ENCODE measurements at regions of chr15 and their contacts with region 1.

Region 1: DNA sequence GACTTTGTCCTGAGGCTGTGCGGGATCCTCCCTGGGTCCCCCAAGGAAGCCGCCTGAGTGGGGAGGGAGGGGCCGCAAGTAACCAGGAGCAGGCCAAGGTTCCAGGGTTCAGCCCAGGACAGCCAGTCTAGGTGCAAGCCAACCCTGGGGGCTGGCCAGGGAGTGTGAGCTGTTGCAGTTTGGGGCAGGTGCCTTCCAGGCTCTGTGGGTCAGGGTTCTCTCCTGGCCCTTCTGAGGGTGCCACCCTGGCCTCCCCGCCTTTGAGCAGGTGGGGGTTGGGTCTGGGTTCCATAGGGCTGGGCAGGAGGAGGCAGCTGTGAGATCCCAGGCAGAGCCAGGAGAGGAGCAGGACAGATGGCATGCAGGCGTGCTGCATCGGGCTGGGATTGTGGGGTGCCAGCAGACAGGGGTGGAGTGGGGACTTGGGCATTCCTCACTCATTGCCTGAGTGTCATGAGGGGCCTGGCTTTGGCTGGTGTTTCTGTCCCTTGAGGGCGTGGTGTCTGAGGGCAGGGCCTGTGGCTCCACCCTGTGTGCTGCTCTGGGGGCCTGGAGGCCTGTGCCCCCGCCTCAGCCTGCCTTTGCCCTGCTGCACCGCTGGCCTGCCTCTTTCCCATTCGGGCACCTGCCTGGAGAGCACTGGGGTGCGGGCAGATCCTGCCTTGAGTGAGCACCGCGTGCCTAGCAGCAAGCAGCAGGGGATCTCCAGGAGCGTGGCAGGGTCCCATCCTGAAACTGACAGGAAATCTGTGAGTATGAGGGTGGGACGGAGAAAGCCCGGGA is 18.4 kb downstream of the KLF13 start:
- DNase-seq: peak in 1 of 9 experiments; percentile 68
- ATAC-seq: no peak
- H3K4me3 ChIP-seq: peak overlapping the region; percentile 55 to 72
- H3K4me3 Mint-ChIP-seq: peak overlapping the region; percentile 91
- H3K27ac ChIP-seq: peak overlapping the region; percentile 70 to 78
- H3K27ac Mint-ChIP-seq: peak overlapping the region; percentile 97
- H3K4me1 ChIP-seq: peaks cover 99% of the 10 kb centered on the region
- H3K4me1 Mint-ChIP-seq: peaks cover 98% of the 10 kb centered on the region
- H3K27me3 ChIP-seq: no peaks in the 10 kb centered on the region
- H3K27me3 Mint-ChIP-seq: no peaks in the 10 kb centered on the region
- CTCF ChIP-seq: no peak

Region 2: DNA sequence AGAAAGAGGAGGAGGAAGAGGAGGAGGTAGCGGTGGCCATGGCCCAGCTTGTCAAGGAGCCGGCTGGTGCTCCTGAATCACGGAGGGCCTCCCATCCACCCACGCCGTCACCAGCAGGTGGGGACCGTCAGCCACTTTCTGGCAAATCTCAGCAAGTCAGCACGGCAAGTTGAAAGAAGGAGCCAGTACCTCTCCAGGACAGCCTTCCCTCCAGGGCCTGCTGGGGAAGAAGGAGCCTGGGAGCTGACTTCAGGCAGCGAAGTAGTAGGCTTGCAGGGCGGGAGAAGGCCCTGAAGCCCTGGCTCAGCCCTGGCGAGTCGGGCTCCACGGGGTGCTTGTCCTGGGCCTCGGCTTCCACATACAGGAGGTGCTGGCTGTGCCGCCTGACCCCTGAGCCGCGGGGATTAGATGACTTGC is 144.3 kb before region 1 on chr15:
- CTCF ChIA-PET with region 1: interaction called, 5 read pairs
- POLR2A ChIA-PET with region 1: interaction called, 3 read pairs
- intact Hi-C with region 1: loop called in 1 of 2 experiments (anchors 5 kb)
- DNase-seq: peak; percentile 52 to 83 (median 71)
- ATAC-seq: peak; percentile 76
- H3K4me3 ChIP-seq: no peak overlapping the region
- H3K4me3 Mint-ChIP-seq: no peak overlapping the region
- H3K27ac ChIP-seq: no peak overlapping the region
- H3K27ac Mint-ChIP-seq: no peak overlapping the region
- H3K4me1 ChIP-seq: peaks cover 20% of the 10 kb centered on the region
- H3K4me1 Mint-ChIP-seq: peaks cover 20% of the 10 kb centered on the region
- H3K27me3 ChIP-seq: no peaks in the 10 kb centered on the region
- H3K27me3 Mint-ChIP-seq: no peaks in the 10 kb centered on the region
- CTCF ChIP-seq: peak; percentile 51

Region 3: DNA sequence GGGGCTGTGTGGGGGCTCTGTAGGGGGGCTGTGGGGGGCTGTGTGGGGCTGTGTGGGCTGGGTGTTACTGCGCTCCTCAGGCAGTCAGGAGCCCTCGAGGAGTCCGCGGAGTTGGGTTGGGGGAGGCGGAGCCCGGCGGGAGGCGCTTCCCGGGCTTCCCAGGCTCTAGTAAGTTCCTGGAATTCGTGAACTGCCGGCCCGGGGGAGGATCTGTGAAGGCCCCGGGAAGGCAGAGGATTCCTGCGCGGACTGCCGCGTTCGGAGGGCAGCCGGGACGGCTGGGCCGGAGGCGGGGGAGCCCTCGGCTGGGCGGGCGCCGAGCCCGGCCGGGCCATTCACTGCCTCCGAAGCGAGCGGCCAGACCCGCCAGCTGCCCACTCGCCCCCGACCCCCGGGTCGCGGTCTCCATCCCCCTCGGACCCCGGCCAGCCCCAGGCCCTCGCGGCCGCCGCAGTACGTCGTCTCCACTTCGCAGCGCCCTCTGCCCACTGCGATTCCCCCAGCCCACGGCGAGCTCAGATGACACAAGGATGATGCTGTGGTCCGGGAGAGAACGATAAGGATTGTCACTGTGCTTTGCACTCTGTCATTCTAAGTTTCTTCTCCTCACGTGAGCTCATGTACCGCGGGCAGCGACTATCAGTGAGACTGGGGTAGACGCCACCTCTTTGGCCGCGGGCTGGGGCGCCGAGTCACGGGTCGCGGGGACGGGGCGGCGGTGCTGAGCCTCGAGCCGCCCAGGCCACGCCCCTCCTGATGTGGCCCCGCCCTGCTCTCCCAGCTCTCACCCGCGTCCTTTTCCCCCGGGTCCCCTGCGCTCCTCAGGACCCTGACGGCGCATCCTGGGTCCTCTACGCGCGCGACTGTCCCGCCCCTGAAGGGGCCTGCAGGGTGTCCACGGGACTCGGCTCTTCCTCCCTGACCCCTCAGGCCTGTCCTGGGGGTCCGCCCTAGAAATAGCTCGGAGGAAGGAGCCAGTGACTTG is 47.0 kb after region 1 on chr15:
- CTCF ChIA-PET with region 1: interaction called, 3 read pairs
- POLR2A ChIA-PET with region 1: interaction called, 8 read pairs
- intact Hi-C with region 1: loop called in 1 of 2 experiments (anchors 2 kb)
- DNase-seq: peak; percentile 62 to 92 (median 86)
- ATAC-seq: peak; percentile 82
- H3K4me3 ChIP-seq: peak overlapping the region; percentile 86 to 95
- H3K4me3 Mint-ChIP-seq: peak overlapping the region; percentile 91
- H3K27ac ChIP-seq: peak overlapping the region; percentile 80 to 81
- H3K27ac Mint-ChIP-seq: peak overlapping the region; percentile 95
- H3K4me1 ChIP-seq: peaks cover 44% of the 10 kb centered on the region
- H3K4me1 Mint-ChIP-seq: peaks cover 61% of the 10 kb centered on the region
- H3K27me3 ChIP-seq: no peaks in the 10 kb centered on the region
- H3K27me3 Mint-ChIP-seq: no peaks in the 10 kb centered on the region
- CTCF ChIP-seq: no peak

Region 4: GRCh38 chr15:31483053-31483985 is 138.3 kb after region 1 on chr15:
- CTCF ChIA-PET with region 1: interaction called, 42 read pairs
- POLR2A ChIA-PET with region 1: interaction called, 6 read pairs
- intact Hi-C with region 1: loop called (anchors 5 kb)
- DNase-seq: peak; percentile 15 to 83 (median 60)
- ATAC-seq: peak; percentile 58
- H3K4me3 ChIP-seq: peak overlapping the region; percentile 60 to 67
- H3K4me3 Mint-ChIP-seq: peak overlapping the region; percentile 95
- H3K27ac ChIP-seq: peak overlapping the region in 1 of 2 experiments; percentile 59
- H3K27ac Mint-ChIP-seq: peak overlapping the region; percentile 97
- H3K4me1 ChIP-seq: peaks cover 44% of the 10 kb centered on the region
- H3K4me1 Mint-ChIP-seq: peaks cover 66% of the 10 kb centered on the region
- H3K27me3 ChIP-seq: peaks cover 0 to 3% of the 10 kb centered on the region in 2 experiments
- H3K27me3 Mint-ChIP-seq: no peaks in the 10 kb centered on the region
- CTCF ChIP-seq: no peak